ENCODE measurements at regions of chr2 and their contacts with region 1.

Region 1: GRCh38 chr2:198036029-198036879 is 231.9 kb downstream of the PLCL1 start:
- DNase-seq: no peak
- ATAC-seq: peak; percentile 97
- H3K4me3 ChIP-seq: no peak overlapping the region
- H3K27ac ChIP-seq: no peak overlapping the region
- H3K4me1 ChIP-seq: no peaks in the 10 kb centered on the region
- H3K27me3 ChIP-seq: no peaks in the 10 kb centered on the region
- CTCF ChIP-seq: no peak
- EP300 ChIP-seq: peak in 1 of 2 experiments; percentile 21; a peak in 1 of 4 replicates
- POLR2A ChIP-seq: no peak
- RAD21 ChIP-seq: no peak

Region 2: DNA sequence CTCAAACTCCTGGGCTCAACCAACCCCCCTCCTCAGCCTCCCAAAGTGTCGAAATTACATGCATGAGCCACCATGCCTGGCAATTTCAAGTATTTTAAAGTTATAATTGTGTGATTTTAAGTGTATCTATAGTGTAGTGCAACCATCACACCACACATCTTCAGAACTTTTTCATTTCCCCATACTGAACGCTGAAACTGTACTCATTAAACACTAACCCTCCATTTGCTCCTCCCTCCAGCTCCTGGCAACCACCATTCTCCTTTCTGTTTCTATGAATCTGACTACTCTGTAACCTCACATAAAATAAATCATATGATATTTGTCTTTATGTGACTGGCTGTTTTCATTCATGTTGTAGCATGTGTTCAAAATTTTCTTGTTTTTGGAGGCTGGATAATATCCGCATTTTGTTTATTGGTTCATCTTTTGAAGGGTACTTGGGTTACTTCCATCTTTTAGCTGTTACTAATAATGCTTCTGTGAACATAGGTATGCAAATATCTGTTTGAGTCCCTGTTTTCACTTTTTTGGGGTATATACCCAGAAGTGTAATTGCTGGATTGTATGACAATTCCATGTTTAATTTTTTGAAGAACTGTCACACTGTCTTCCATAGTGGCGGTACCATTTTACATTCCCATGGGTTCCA is 43.6 kb before region 1 on chr2:
- CTCF ChIA-PET with region 1: interaction called, 4 read pairs
- POLR2A ChIA-PET with region 1: interaction called, 4 read pairs
- RAD21 ChIA-PET with region 1: interaction called, 13 read pairs
- SMC1A ChIA-PET with region 1: interaction called, 7 read pairs
- in situ Hi-C with region 1: no loop called
- intact Hi-C with region 1: no loop called
- DNase-seq: no peak
- ATAC-seq: peak; percentile 98
- H3K4me3 ChIP-seq: no peak overlapping the region
- H3K27ac ChIP-seq: peak overlapping the region; percentile 43; the same call in 1 of the 2 replicates
- H3K4me1 ChIP-seq: peaks cover 16% of the 10 kb centered on the region
- H3K27me3 ChIP-seq: no peaks in the 10 kb centered on the region
- CTCF ChIP-seq: no peak
- EP300 ChIP-seq: 0 out of 4 replicates have a peak, but pooled peaks of 1 of the 2 experiments have one; percentile 9
- POLR2A ChIP-seq: no peak
- RAD21 ChIP-seq: no peak

Region 3: GRCh38 chr2:198016243-198016642 is 20.0 kb before region 1 on chr2:
- CTCF ChIA-PET with region 1: interaction called, 4 read pairs
- POLR2A ChIA-PET with region 1: interaction called, 3 read pairs
- RAD21 ChIA-PET with region 1: interaction called, 3 read pairs
- SMC1A ChIA-PET with region 1: interaction called, 16 read pairs
- in situ Hi-C with region 1: no loop called
- intact Hi-C with region 1: no loop called
- DNase-seq: no peak
- ATAC-seq: peak; percentile 21; the same call in 2 of the 3 replicates
- H3K4me3 ChIP-seq: no peak overlapping the region
- H3K27ac ChIP-seq: no peak overlapping the region
- H3K4me1 ChIP-seq: peaks cover 5% of the 10 kb centered on the region; the same call in 1 of the 2 replicates
- H3K27me3 ChIP-seq: no peaks in the 10 kb centered on the region
- CTCF ChIP-seq: no peak
- EP300 ChIP-seq: no peak
- POLR2A ChIP-seq: no peak
- RAD21 ChIP-seq: no peak

Region 4: DNA sequence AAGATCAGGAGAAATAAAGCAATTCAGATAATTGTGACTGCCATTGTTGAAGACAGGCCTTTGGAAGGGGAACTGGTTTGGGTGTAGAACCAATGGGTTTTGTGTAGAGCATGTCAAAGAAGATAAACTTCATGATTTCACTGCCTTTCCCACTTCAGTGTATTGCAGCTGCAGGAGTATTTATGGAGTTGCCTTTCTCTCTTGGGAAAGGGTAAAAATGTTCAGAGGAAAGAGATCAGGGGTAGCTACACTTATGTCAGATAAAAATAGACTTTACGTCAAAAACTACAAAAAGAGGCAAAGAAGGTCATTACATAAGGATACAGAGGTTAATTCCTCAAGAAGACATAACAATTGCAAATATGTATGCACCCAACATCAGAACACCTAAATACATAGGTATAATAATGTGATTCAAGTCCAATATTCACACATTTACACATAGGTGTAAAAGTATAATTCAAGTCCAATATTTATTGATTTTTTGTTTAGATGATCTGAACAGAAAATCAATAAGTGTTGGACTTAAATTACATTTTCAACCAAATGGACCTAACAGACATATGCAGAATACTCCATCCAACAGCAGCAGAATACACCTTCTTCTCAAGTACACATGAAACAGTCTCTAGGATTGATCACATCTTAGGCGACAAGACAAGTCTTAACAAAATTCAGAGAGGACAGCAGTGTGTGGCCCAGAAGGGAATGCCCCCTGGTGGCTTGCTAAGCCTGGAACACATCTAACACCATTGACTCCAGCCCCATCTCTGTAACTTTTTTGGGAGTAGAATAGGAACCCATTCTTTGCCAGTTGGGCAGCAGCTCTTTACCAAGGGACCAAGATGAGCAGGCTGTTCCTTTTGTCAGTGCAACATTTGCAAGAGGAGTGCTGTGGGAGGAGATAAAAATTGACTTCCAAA is 17.8 kb after region 1 on chr2:
- CTCF ChIA-PET with region 1: interaction called, 4 read pairs
- POLR2A ChIA-PET with region 1: interaction called, 8 read pairs
- RAD21 ChIA-PET with region 1: interaction called, 3 read pairs
- SMC1A ChIA-PET with region 1: interaction called, 17 read pairs
- in situ Hi-C with region 1: no loop called
- intact Hi-C with region 1: no loop called
- DNase-seq: no peak
- ATAC-seq: peak; percentile 97
- H3K4me3 ChIP-seq: no peak overlapping the region
- H3K27ac ChIP-seq: no peak overlapping the region
- H3K4me1 ChIP-seq: no peaks in the 10 kb centered on the region
- H3K27me3 ChIP-seq: no peaks in the 10 kb centered on the region
- CTCF ChIP-seq: peak; percentile 47 to 65 (median 59)
- EP300 ChIP-seq: no peak
- POLR2A ChIP-seq: no peak
- RAD21 ChIP-seq: peak; percentile 80

Region 5: GRCh38 chr2:198063242-198063641 is 27.0 kb after region 1 on chr2:
- CTCF ChIA-PET with region 1: interaction called, 4 read pairs
- POLR2A ChIA-PET with region 1: no interaction called
- RAD21 ChIA-PET with region 1: interaction called, 6 read pairs
- SMC1A ChIA-PET with region 1: interaction called, 13 read pairs
- in situ Hi-C with region 1: no loop called
- intact Hi-C with region 1: no loop called
- DNase-seq: no peak
- ATAC-seq: peak; percentile 57
- H3K4me3 ChIP-seq: no peak overlapping the region
- H3K27ac ChIP-seq: no peak overlapping the region
- H3K4me1 ChIP-seq: no peaks in the 10 kb centered on the region
- H3K27me3 ChIP-seq: no peaks in the 10 kb centered on the region; a peak in 1 of 4 replicates
- CTCF ChIP-seq: no peak
- EP300 ChIP-seq: no peak
- POLR2A ChIP-seq: no peak
- RAD21 ChIP-seq: no peak